ENCODE measurements at regions of chr12 and their contacts with region 1.

Region 1: DNA sequence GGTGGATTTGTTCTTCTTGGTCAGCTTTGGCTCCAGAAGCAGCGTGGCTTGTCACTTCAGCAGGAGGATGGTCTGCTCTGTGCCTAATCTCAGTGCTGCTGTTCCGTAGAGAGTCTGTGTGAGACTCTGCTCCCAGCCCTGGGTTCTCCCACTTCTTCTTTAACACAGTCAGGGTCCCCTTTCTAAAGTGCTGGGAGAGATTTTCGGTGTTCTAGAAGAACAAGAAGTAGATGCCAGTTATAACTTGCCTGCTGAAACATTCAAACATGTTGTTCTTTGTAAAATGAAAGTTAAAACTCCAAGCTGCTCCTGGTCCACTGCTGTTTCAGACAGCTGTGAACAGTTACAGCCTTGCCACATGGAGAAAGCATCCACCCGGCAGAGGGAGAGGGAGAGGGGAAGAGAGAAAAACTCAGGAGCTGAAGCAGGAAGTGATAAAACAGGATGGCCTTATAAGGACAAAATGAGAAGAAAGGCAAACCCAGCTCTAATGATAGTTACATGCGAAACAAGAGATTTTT is 55.2 kb upstream of the CERS5 start:
- DNase-seq: no peak

Region 2: DNA sequence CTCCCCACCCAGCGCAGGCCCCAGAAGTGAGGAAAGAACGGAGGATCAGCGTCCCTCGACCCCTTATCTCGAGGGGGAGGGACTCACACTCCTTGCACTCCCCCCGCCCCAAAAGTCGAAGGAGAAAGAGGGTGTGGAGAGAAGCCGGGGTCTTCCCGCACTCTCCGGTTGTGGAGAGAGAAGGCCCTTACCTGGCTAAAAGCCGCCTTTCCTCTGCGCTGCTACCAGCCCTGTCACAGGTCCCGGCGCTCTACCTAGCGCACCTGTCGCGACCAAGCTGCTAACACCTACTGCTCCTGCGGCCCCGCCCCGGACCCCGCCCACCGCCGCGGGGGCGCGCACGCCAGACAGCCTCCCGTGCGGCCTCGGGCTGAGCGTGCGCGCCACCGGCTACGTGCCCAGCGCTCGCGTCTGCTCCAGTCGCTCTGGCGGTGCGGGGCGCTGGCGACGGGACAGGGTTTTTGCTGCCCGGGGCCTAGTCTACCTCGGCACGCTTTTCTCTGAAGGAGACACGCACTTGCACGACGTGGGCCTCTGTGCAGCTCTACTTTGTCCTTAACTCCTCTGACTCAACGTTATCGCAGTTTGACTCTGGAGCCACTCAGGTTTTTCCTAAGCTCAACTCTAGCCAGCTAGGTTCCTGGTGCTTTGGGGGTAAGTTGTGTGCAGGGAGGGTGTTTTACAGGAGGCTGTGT is 61.0 kb after region 1 on chr12 and contains the start of gene LIMA1:
- intact Hi-C with region 1: loop called in 1 of 2 experiments (anchors 10 kb)
- DNase-seq: peak; percentile 97
- total RNA-seq, gene LIMA1: 80.2 to 103 TPM

Region 3: GRCh38 chr12:50314629-50315312 is 92.4 kb after region 1 on chr12:
- intact Hi-C with region 1: loop called in 1 of 2 experiments (anchors 10 kb)
- DNase-seq: no peak